H1 (cell line): ENCODE measurements at regions of chr11 and their contacts with region 1.

Region 1: GRCh38 chr11:122108192-122108799 is 7.7 kb downstream of the BLID start:
- DNase-seq: peak in 1 of 2 experiments; percentile 77
- H3K4me3 ChIP-seq: no peak overlapping the region
- H3K27ac ChIP-seq: no peak overlapping the region
- H3K4me1 ChIP-seq: peaks cover 0 to 3% (median under 1%) of the 10 kb centered on the region in 4 experiments; a peak in 2 of 7 replicates
- H3K27me3 ChIP-seq: no peaks in the 10 kb centered on the region
- CTCF ChIP-seq: peak in 2 of 3 experiments; percentile 76 to 89; a peak in 3 of 4 replicates
- EP300 ChIP-seq: no peak
- POLR2A ChIP-seq: no peak
- RAD21 ChIP-seq: peak; percentile 66 to 71

Region 2: GRCh38 chr11:122089111-122089510 is 19.2 kb before region 1 on chr11:
- CTCF ChIA-PET with region 1: interaction called, 11 read pairs
- POLR2A ChIA-PET with region 1: interaction called, 3 read pairs
- DNase-seq: no peak
- H3K4me3 ChIP-seq: no peak overlapping the region
- H3K27ac ChIP-seq: no peak overlapping the region
- H3K4me1 ChIP-seq: no peaks in the 10 kb centered on the region
- H3K27me3 ChIP-seq: no peaks in the 10 kb centered on the region
- CTCF ChIP-seq: no peak
- EP300 ChIP-seq: no peak
- POLR2A ChIP-seq: no peak
- RAD21 ChIP-seq: no peak

Region 3: DNA sequence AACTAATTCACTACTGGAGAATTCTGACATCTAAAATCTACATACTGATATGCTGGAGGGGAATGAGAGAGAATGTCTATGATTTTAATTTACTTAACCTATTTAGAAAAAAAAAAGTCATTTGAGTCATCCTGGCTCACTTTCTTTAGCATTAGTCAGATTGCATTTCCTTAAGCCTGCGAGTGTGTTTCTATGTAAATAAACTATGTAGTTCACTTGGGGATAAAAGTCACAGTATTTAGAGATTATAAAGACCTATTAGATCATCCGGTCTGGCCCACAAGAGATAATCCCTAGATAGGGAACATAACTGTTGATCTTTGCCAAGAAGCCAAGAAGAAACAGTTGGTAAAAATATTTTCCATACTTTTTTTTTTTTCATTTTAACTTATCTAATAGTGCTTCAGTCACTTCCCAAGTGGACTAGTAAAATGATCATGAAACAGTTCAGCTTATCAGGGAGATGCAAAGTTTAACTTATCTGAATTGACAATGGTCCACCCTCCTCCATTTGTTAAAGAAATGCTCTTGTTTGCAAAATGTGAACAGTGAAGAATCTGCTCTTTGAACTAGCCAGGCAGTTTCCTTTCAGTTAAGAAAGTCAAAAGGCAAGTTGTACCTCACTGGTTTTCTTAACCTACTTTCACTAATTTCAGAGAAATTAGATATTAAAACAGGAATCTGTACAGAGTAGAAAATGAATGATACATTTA is 28.9 kb after region 1 on chr11:
- CTCF ChIA-PET with region 1: interaction called, 13 read pairs
- POLR2A ChIA-PET with region 1: no interaction called
- DNase-seq: no peak
- H3K4me3 ChIP-seq: no peak overlapping the region
- H3K27ac ChIP-seq: no peak overlapping the region
- H3K4me1 ChIP-seq: no peaks in the 10 kb centered on the region
- H3K27me3 ChIP-seq: peaks cover 1 to 26% (median 11%) of the 10 kb centered on the region in 4 experiments
- CTCF ChIP-seq: no peak
- EP300 ChIP-seq: no peak
- POLR2A ChIP-seq: no peak
- RAD21 ChIP-seq: no peak

Region 4: GRCh38 chr11:122235615-122236014 is 127.3 kb after region 1 on chr11:
- CTCF ChIA-PET with region 1: no interaction called
- POLR2A ChIA-PET with region 1: no interaction called
- DNase-seq: no peak
- H3K4me3 ChIP-seq: no peak overlapping the region
- H3K27ac ChIP-seq: no peak overlapping the region
- H3K4me1 ChIP-seq: no peaks in the 10 kb centered on the region
- H3K27me3 ChIP-seq: no peaks in the 10 kb centered on the region
- CTCF ChIP-seq: no peak
- EP300 ChIP-seq: no peak
- POLR2A ChIP-seq: no peak
- RAD21 ChIP-seq: no peak